Activated CD4-positive, alpha-beta T cell treated with anti-CD3 and anti-CD28 coated beads, Interleukin-2, amount 10 ng/mL, durations not matched to agents 24 days and 14 days (primary cell): ENCODE measurements at regions of chr16 and their contacts with region 1.

Region 1: DNA sequence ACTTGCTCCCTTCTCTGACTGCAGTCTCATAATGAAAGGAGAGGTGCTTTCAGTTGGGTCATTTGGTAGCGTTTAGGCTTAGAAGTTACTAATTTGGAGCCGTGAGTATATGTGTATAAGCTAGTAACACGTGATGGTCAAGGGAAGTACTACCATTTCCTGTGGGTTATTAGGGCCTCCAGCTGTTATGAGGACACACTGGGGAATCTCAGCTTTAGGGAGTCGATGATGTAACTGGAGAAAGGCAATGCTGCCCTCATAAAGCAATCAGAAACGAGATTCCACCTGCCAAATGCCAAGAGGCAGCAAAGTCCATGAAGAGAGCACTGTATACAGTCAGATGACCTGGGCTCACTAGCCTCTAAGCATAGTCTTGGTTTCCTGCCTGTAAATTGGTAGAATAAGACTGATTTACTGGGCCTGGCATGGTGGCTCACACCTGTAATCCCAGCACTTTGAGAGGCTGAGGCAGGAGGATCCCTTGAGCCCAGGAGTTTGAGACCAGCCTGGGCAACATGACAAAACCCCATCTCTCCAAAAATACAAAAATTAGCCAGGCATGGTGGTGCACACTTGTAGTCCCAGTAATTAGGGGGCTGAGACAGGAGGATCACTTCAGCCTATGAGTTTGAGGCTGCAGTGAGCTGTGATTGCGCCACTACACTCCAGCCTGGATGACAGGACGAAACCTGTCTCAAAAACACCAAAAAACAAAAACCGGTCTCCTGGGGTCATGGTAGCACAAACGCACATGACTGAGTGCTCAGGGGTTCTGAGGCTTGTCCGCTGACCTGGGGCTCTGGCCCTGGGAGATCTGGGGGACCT is 53.0 kb downstream of the SF3B3 start:
- DNase-seq: no peak
- H3K4me3 Mint-ChIP-seq: no peak overlapping the region
- H3K27ac Mint-ChIP-seq: peak overlapping the region; percentile 7
- H3K4me1 Mint-ChIP-seq: peaks cover 2% of the 10 kb centered on the region
- H3K27me3 Mint-ChIP-seq: no peaks in the 10 kb centered on the region

Region 2: DNA sequence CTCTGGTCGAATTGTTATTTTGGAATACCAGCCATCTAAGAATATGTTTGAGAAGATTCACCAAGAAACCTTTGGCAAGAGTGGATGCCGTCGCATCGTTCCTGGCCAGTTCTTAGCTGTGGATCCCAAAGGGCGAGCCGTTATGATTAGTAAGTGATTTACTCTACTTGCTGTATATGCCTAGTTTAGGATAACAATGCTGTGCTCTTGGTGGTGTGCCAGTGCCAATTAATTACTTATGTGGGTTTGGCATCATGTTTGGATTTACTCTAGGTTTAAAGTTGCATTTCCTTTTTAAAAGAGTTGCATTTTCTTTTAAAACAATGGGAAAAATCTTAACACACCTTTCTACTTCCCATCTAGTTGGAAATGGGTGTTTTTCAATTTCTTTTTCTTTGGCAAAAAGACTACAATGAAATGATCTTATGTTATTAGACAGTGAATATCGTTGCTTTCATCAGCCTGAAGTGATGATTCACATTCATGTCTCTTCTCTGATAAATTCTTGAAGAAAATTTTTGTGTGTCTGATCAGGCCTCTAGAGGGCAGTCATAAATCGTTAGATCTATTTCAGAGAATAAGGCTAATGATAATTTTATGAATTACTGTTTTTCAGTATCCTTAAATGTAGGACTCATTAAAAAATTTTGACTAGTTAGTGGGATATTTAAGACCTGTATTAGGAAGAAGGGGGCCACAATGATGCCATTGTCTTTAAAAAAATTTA is 47.4 kb before region 1 on chr16:
- intact Hi-C with region 1: loop called (anchors 5 kb)
- DNase-seq: peak; percentile 63
- H3K4me3 Mint-ChIP-seq: peak overlapping the region; percentile 60
- H3K27ac Mint-ChIP-seq: no peak overlapping the region
- H3K4me1 Mint-ChIP-seq: peaks cover 42% of the 10 kb centered on the region
- H3K27me3 Mint-ChIP-seq: no peaks in the 10 kb centered on the region